A549 (cell line): ENCODE measurements at regions of chr9 and their contacts with region 1.

Region 1: GRCh38 chr9:97921959-97922724 is at the start of gene TRMO:
- DNase-seq: peak; percentile 90 to 99
- ATAC-seq: peak; percentile 91 to 92
- H3K4me3 ChIP-seq: peak within 1 kb of the TSS; percentile 55
- H3K27ac ChIP-seq: peak within 1 kb of the TSS; percentile 94 to 95
- H3K4me1 ChIP-seq: 0 out of 3 replicates have a peak, but pooled peaks cover 5% of the 10 kb centered on the region
- CTCF ChIP-seq: peak; percentile 70
- EP300 ChIP-seq: no peak
- POLR2A ChIP-seq: peak; percentile 85
- RAD21 ChIP-seq: peak in 1 of 2 experiments; percentile 45; a peak in 3 of 5 replicates
- polyA plus RNA-seq, gene TRMO: 18.8 and 19.4 TPM in 2 replicates

Region 2: GRCh38 chr9:97721396-97721795 is 200.7 kb before region 1 on chr9:
- CTCF ChIA-PET with region 1: interaction called, 10 read pairs
- POLR2A ChIA-PET with region 1: no interaction called
- DNase-seq: no peak
- ATAC-seq: no peak
- H3K4me3 ChIP-seq: no peak overlapping the region
- H3K27ac ChIP-seq: no peak overlapping the region
- H3K4me1 ChIP-seq: 0 out of 3 replicates have a peak, but pooled peaks cover 3% of the 10 kb centered on the region
- CTCF ChIP-seq: no peak
- EP300 ChIP-seq: no peak
- POLR2A ChIP-seq: no peak
- RAD21 ChIP-seq: no peak

Region 3: DNA sequence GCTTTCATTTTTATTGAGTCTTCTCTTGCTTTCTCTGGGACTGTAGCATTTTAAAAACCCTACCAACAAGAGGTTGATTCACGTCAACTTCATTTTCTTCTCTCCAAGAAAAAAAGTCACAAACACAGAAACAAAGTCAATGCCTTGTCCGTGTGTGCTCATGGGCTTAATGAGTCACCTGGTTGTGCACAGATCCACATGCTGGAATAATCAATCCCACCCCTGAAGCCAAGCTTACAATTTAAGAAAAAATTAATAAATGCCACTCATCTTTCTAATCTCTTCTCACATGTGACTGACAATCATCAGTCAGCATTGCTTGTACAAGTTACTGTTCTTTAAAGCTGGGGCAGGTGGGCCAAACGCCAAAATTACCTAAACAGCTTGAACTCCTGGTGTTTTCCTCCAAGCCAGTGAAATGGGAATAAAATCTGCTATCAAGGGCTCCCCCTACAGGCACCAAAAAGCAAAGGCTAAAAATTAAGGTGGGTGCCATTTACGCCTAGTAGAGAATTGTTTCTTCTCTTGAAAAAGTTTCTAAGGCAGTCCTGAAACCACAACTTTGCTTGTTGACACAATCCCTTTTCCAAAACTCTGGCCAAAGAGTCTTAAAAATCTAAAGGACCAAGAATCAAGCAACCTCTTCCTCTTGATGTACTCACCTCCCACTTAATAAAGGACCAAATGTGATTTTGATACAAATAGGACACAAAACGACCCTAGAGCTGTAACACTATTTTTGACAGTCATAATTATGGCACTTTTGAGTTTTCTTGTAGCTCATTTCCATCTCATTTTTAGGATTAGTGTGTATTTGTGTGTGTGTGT is 21.2 kb before region 1 on chr9:
- CTCF ChIA-PET with region 1: interaction called, 51 read pairs
- POLR2A ChIA-PET with region 1: no interaction called
- DNase-seq: peak; percentile 59 to 74
- ATAC-seq: peak; percentile 77 to 86; a peak in 4 of 6 replicates
- H3K4me3 ChIP-seq: no peak overlapping the region
- H3K27ac ChIP-seq: peak overlapping the region in 1 of 2 experiments; percentile 46; a peak in 3 of 6 replicates
- H3K4me1 ChIP-seq: peaks cover 3% of the 10 kb centered on the region; the same call in 2 of the 3 replicates
- CTCF ChIP-seq: peak; percentile 89
- EP300 ChIP-seq: no peak
- POLR2A ChIP-seq: no peak
- RAD21 ChIP-seq: peak; percentile 88 to 89

Region 4: GRCh38 chr9:97934321-97935115 is 12.4 kb after region 1 on chr9:
- CTCF ChIA-PET with region 1: interaction called, 46 read pairs
- POLR2A ChIA-PET with region 1: interaction called, 3 read pairs
- DNase-seq: no peak
- ATAC-seq: peak; percentile 49 to 50; a peak in 3 of 6 replicates
- H3K4me3 ChIP-seq: no peak overlapping the region
- H3K27ac ChIP-seq: no peak overlapping the region
- H3K4me1 ChIP-seq: no peaks in the 10 kb centered on the region
- CTCF ChIP-seq: no peak
- EP300 ChIP-seq: no peak
- POLR2A ChIP-seq: no peak
- RAD21 ChIP-seq: no peak

Region 5: DNA sequence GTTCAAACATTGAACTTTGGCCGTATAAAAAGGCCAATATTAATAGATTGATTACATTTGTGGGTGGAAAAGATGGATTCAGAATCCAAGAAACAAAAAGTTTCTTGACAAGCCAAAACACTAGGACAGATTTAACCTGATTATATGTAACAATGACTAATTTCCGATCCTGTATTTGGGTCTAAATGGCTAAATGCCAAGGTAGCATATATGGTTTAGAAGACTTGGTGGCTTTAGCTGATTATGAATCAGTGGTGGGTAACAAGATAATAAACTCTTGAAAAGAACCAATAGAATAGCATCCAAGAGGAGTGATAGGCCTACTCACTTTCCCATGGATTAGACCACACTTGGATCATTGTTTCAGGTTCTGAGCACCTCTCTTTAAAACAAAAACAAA is 39.2 kb after region 1 on chr9:
- CTCF ChIA-PET with region 1: interaction called, 116 read pairs
- POLR2A ChIA-PET with region 1: interaction called, 4 read pairs
- DNase-seq: no peak
- ATAC-seq: no peak
- H3K4me3 ChIP-seq: no peak overlapping the region
- H3K27ac ChIP-seq: no peak overlapping the region
- H3K4me1 ChIP-seq: no peaks in the 10 kb centered on the region
- CTCF ChIP-seq: no peak
- EP300 ChIP-seq: no peak
- POLR2A ChIP-seq: no peak
- RAD21 ChIP-seq: no peak

Region 6: DNA sequence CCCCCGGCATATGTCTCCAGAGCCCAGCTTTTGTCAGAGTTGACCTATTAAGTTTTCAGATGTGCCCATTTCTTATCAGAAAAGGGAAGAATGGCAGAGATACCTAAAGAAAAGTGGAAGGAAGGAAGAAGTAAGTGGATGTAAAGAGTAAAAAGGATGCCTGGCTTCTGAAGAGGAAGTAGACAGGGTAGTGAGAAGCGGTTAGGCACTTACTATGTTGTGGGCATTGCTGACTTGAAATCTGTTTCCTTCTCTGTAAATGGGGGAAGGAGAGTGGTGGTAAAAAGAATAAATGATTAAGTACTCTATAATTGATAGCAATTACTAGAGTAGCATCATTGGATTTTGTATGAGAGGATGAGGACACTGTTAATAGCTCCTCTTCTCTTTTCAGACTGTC is 70.9 kb after region 1 on chr9:
- CTCF ChIA-PET with region 1: interaction called, 14 read pairs
- POLR2A ChIA-PET with region 1: interaction called, 4 read pairs
- DNase-seq: no peak
- ATAC-seq: no peak
- H3K4me3 ChIP-seq: no peak overlapping the region
- H3K27ac ChIP-seq: no peak overlapping the region
- H3K4me1 ChIP-seq: peaks cover 60% of the 10 kb centered on the region
- CTCF ChIP-seq: no peak
- EP300 ChIP-seq: no peak
- POLR2A ChIP-seq: no peak
- RAD21 ChIP-seq: no peak

Region 7: DNA sequence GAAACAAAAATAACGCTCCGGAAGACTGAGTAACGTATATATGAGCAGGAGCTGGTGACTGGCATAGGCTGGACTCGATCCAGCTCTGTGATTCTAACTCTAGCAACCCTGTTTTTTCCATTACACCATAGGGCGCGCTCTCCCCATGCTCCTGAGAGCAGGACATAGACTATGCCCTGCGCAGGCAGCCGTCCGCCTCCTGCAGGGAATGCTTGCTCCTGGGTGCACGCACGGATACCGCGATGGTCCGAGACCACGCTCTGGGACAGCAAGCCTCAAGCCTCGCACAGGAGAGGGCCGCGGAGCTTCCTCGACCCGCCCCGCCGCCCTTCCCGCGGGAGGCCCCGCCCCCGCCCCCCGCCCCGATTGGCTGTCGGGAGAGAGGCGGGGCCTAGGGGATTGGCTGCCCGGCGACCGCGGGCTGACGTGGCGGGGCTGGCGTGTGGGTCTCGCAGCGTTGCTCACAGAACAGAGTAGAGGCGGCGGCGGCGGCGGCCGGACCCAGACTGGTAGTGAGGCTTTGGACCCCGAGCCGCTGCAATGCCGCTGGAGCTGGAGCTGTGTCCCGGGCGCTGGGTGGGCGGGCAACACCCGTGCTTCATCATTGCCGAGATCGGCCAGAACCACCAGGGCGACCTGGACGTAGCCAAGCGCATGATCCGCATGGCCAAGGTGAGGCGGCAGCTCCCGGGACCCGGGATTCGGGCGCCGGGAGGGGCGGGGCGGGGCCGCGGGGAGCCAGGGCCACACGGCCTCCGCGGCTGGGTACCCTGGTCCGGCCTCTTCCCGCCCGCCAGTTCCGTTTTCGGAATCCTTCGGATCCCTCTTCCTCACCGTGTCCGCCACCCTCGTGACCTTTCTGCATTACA is 134.4 kb after region 1 on chr9 and contains the start of gene NANS:
- CTCF ChIA-PET with region 1: interaction called, 7 read pairs
- POLR2A ChIA-PET with region 1: interaction called, 17 read pairs
- DNase-seq: peak; percentile 91 to 96
- ATAC-seq: peak; percentile 96 to 98
- H3K4me3 ChIP-seq: peak within 1 kb of the TSS; percentile 70
- H3K27ac ChIP-seq: peak within 1 kb of the TSS; percentile 86 to 93
- H3K4me1 ChIP-seq: peaks cover 16% of the 10 kb centered on the region; the same call in 2 of the 3 replicates
- CTCF ChIP-seq: no peak
- EP300 ChIP-seq: no peak
- POLR2A ChIP-seq: peak; percentile 92
- RAD21 ChIP-seq: no peak
- polyA plus RNA-seq, gene NANS: 66.6 and 70.2 TPM in 2 replicates

Region 8: GRCh38 chr9:98185611-98186171 is 263.5 kb after region 1 on chr9:
- CTCF ChIA-PET with region 1: no interaction called
- POLR2A ChIA-PET with region 1: no interaction called
- DNase-seq: no peak
- ATAC-seq: peak in 1 of 2 experiments; percentile 57; a peak in 4 of 6 replicates
- H3K4me3 ChIP-seq: no peak overlapping the region
- H3K27ac ChIP-seq: no peak overlapping the region
- H3K4me1 ChIP-seq: 0 out of 3 replicates have a peak, but pooled peaks cover 5% of the 10 kb centered on the region
- CTCF ChIP-seq: no peak
- EP300 ChIP-seq: no peak
- POLR2A ChIP-seq: no peak
- RAD21 ChIP-seq: no peak